ENCODE measurements at regions of chr3 and their contacts with region 1.

Region 1: DNA sequence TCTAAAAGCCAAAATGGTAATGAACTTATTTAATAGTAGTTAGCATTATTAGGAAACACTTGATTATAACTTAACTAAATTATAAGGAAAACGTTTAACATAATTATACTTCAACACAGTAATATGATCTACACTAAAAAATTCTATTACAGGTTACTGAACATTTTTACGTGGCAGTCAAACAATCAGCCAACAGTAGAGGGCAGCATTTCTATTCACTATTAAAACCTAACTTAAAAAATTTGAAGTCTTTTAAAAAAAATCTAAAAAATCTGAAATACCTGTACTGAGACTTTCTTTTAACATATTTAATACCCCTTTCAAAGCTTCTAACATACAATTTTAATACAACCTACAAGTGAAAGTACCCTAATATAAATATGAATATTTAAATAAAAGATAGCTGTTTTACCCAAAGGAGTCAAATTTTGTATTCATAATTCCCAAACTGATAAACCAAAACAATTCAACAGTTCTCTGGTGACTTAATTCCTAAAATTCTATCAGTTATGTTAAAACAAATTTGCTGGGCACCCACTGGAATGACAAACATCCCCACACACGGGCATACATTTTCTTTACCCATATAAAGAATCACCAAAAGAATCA is 41.5 kb downstream of the DLG1 start:
- DNase-seq: no peak
- ATAC-seq: 0 out of 3 replicates have a peak, but pooled peaks have one; percentile 38
- H3K4me3 ChIP-seq: no peak overlapping the region
- H3K27ac ChIP-seq: no peak overlapping the region
- H3K4me1 ChIP-seq: no peaks in the 10 kb centered on the region
- H3K27me3 ChIP-seq: no peaks in the 10 kb centered on the region
- CTCF ChIP-seq: peak; percentile 40 to 60 (median 56); a peak in 5 of 6 replicates
- EP300 ChIP-seq: no peak
- POLR2A ChIP-seq: no peak
- RAD21 ChIP-seq: peak; percentile 70

Region 2: DNA sequence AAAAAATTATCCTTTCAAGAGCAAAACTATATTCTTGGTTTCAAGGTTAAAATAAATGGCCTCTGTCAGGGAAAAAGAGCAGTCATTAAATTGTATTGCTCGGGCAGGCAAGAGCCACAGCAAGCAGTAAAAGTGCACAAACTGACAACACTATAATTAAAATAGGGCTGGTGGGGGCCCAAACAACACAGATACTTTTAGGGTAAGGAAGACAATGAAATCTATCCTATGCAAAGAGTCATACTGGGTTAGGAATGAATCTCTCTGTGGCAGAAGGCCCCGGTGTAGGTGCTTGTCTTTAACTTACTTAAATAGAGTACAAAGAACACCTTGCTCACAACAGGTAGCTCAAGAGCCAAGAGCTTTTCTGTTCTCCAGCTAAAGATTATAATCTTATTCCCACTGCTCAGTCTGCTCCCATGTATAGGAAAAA is 53.2 kb before region 1 on chr3:
- CTCF ChIA-PET with region 1: interaction called, 11 read pairs
- POLR2A ChIA-PET with region 1: no interaction called
- RAD21 ChIA-PET with region 1: no interaction called
- SMC1A ChIA-PET with region 1: interaction called, 3 read pairs
- in situ Hi-C with region 1: no loop called
- intact Hi-C with region 1: no loop called
- DNase-seq: no peak
- ATAC-seq: peak; percentile 44
- H3K4me3 ChIP-seq: no peak overlapping the region
- H3K27ac ChIP-seq: no peak overlapping the region
- H3K4me1 ChIP-seq: no peaks in the 10 kb centered on the region
- H3K27me3 ChIP-seq: no peaks in the 10 kb centered on the region
- CTCF ChIP-seq: no peak
- EP300 ChIP-seq: no peak
- POLR2A ChIP-seq: no peak
- RAD21 ChIP-seq: no peak

Region 3: GRCh38 chr3:197234947-197235914 is 21.7 kb before region 1 on chr3:
- CTCF ChIA-PET with region 1: interaction called, 24 read pairs
- POLR2A ChIA-PET with region 1: interaction called, 4 read pairs
- RAD21 ChIA-PET with region 1: interaction called, 5 read pairs
- SMC1A ChIA-PET with region 1: interaction called, 24 read pairs
- in situ Hi-C with region 1: no loop called
- intact Hi-C with region 1: no loop called
- DNase-seq: no peak
- ATAC-seq: no peak
- H3K4me3 ChIP-seq: no peak overlapping the region
- H3K27ac ChIP-seq: no peak overlapping the region
- H3K4me1 ChIP-seq: peaks cover 25% of the 10 kb centered on the region
- H3K27me3 ChIP-seq: no peaks in the 10 kb centered on the region
- CTCF ChIP-seq: no peak
- EP300 ChIP-seq: no peak
- POLR2A ChIP-seq: no peak
- RAD21 ChIP-seq: no peak

Region 4: GRCh38 chr3:197292083-197292646 is 35.2 kb after region 1 on chr3:
- CTCF ChIA-PET with region 1: interaction called, 12 read pairs
- POLR2A ChIA-PET with region 1: no interaction called
- RAD21 ChIA-PET with region 1: interaction called, 7 read pairs
- SMC1A ChIA-PET with region 1: interaction called, 26 read pairs
- in situ Hi-C with region 1: no loop called
- intact Hi-C with region 1: no loop called
- DNase-seq: no peak
- ATAC-seq: peak; percentile 56
- H3K4me3 ChIP-seq: no peak overlapping the region
- H3K27ac ChIP-seq: no peak overlapping the region
- H3K4me1 ChIP-seq: peaks cover 20% of the 10 kb centered on the region
- H3K27me3 ChIP-seq: no peaks in the 10 kb centered on the region
- CTCF ChIP-seq: no peak
- EP300 ChIP-seq: no peak
- POLR2A ChIP-seq: no peak
- RAD21 ChIP-seq: no peak

Region 5: DNA sequence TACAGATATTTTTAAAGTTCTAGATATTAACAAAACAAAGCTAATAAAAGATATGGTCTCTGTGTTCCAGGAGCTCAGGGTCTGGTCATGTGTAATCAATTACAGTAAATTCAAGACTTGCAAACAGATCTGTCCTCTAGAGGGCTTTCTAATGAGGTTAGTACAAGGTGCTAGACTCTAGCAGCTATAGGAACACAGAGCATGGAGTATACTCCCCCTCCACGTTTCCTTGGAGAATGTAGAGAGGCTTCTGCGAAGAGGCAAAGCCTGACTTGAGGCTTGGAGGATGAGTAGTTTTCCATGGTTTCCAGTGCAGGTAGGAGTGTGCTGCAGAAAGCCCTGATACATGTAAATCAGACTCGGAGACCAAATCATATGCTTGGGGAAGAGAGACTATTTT is 74.2 kb after region 1 on chr3:
- CTCF ChIA-PET with region 1: interaction called, 17 read pairs
- POLR2A ChIA-PET with region 1: no interaction called
- RAD21 ChIA-PET with region 1: no interaction called
- SMC1A ChIA-PET with region 1: interaction called, 3 read pairs
- in situ Hi-C with region 1: no loop called
- intact Hi-C with region 1: no loop called
- DNase-seq: no peak
- ATAC-seq: peak; percentile 56; the same call in 2 of the 3 replicates
- H3K4me3 ChIP-seq: no peak overlapping the region
- H3K27ac ChIP-seq: no peak overlapping the region
- H3K4me1 ChIP-seq: peaks cover 6% of the 10 kb centered on the region
- H3K27me3 ChIP-seq: no peaks in the 10 kb centered on the region
- CTCF ChIP-seq: peak; percentile 7 to 33 (median 11); a peak in 2 of 6 replicates
- EP300 ChIP-seq: no peak
- POLR2A ChIP-seq: no peak
- RAD21 ChIP-seq: peak; percentile 15; the same call in 1 of the 2 replicates

Region 6: GRCh38 chr3:197471221-197472010 is 214.5 kb after region 1 on chr3:
- CTCF ChIA-PET with region 1: interaction called, 11 read pairs
- POLR2A ChIA-PET with region 1: no interaction called
- RAD21 ChIA-PET with region 1: interaction called, 3 read pairs
- SMC1A ChIA-PET with region 1: interaction called, 3 read pairs
- in situ Hi-C with region 1: no loop called
- intact Hi-C with region 1: no loop called
- DNase-seq: no peak
- ATAC-seq: no peak
- H3K4me3 ChIP-seq: no peak overlapping the region
- H3K27ac ChIP-seq: no peak overlapping the region
- H3K4me1 ChIP-seq: 0 out of 2 replicates have a peak, but pooled peaks cover 7% of the 10 kb centered on the region
- H3K27me3 ChIP-seq: peaks cover 0 to 2% of the 10 kb centered on the region in 2 experiments; a peak in 2 of 4 replicates
- CTCF ChIP-seq: no peak
- EP300 ChIP-seq: no peak
- POLR2A ChIP-seq: no peak
- RAD21 ChIP-seq: no peak

Region 7: DNA sequence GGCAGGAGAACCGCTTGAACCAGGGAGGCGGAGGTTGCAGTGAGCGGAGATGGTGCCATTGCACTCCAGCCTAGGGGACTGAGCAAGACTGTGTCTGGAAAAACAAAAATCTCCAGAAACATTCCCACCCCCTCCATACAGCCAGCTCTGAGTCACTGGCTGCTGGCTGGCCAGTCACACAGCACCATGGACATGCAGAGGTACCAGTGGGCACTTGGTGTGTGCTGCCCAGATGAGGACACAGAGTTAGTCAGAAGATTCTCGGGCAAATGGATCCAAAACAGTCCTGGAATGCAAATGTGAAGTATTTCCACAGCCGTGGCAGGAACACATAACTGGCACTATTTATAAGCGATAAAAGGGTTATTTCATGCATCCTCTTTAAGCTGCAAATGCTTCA is 254.2 kb after region 1 on chr3:
- CTCF ChIA-PET with region 1: interaction called, 30 read pairs
- POLR2A ChIA-PET with region 1: no interaction called
- RAD21 ChIA-PET with region 1: interaction called, 26 read pairs
- SMC1A ChIA-PET with region 1: interaction called, 16 read pairs
- in situ Hi-C with region 1: no loop called
- intact Hi-C with region 1: no loop called
- DNase-seq: no peak
- ATAC-seq: no peak
- H3K4me3 ChIP-seq: no peak overlapping the region
- H3K27ac ChIP-seq: no peak overlapping the region
- H3K4me1 ChIP-seq: no peaks in the 10 kb centered on the region
- H3K27me3 ChIP-seq: no peaks in the 10 kb centered on the region
- CTCF ChIP-seq: no peak
- EP300 ChIP-seq: no peak
- POLR2A ChIP-seq: no peak
- RAD21 ChIP-seq: no peak

Measured in GM12878 (cell line).